GM12878 (cell line): ENCODE measurements at regions of chr3 and their contacts with region 1.

Region 1: DNA sequence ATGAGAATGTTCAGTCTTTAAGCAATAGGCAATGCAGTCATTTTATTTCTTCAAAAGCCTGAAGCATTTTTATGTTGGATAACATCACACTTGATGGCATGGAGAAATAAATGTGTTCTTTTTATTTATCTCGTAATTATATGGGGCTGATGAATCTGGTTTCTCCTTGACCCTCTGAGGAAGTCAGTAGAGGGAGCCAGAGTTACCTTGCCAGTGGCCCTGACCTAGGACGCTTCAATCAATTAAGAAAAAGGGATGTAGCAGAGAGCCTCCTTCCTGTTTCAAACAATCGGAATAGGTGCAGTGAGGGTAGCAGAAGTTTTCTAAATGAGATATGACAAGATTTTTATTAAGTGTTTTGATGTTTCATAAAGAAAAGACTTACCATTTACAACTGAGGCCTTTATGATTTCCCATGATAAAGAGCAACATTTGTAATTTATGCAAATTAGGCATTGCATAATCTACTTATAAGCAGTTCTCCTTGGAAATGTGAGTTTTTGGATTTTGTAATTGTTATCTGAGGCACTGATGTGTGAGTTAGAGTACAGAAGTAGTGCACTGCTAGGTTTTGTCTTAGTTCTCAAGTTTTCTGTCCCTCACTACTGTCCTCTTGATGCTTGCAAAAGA is 129.1 kb downstream of the RAP2B start:
- DNase-seq: no peak
- ATAC-seq: peak; percentile 86
- H3K4me3 ChIP-seq: no peak overlapping the region
- H3K27ac ChIP-seq: no peak overlapping the region
- H3K4me1 ChIP-seq: no peaks in the 10 kb centered on the region
- H3K27me3 ChIP-seq: no peaks in the 10 kb centered on the region
- CTCF ChIP-seq: peak; percentile 43 to 48 (median 47)
- EP300 ChIP-seq: no peak
- POLR2A ChIP-seq: no peak
- RAD21 ChIP-seq: peak; percentile 59

Region 2: GRCh38 chr3:153173758-153174516 is 117.2 kb before region 1 on chr3:
- CTCF ChIA-PET with region 1: no interaction called
- POLR2A ChIA-PET with region 1: no interaction called
- RAD21 ChIA-PET with region 1: no interaction called
- SMC1A ChIA-PET with region 1: no interaction called
- in situ Hi-C with region 1: no loop called
- intact Hi-C with region 1: no loop called
- DNase-seq: no peak
- ATAC-seq: peak; percentile 52; the same call in 2 of the 3 replicates
- H3K4me3 ChIP-seq: no peak overlapping the region
- H3K27ac ChIP-seq: no peak overlapping the region
- H3K4me1 ChIP-seq: no peaks in the 10 kb centered on the region
- H3K27me3 ChIP-seq: no peaks in the 10 kb centered on the region
- CTCF ChIP-seq: peak in 1 of 3 experiments; percentile 26; a peak in 1 of 6 replicates
- EP300 ChIP-seq: no peak
- POLR2A ChIP-seq: no peak
- RAD21 ChIP-seq: no peak

Region 3: DNA sequence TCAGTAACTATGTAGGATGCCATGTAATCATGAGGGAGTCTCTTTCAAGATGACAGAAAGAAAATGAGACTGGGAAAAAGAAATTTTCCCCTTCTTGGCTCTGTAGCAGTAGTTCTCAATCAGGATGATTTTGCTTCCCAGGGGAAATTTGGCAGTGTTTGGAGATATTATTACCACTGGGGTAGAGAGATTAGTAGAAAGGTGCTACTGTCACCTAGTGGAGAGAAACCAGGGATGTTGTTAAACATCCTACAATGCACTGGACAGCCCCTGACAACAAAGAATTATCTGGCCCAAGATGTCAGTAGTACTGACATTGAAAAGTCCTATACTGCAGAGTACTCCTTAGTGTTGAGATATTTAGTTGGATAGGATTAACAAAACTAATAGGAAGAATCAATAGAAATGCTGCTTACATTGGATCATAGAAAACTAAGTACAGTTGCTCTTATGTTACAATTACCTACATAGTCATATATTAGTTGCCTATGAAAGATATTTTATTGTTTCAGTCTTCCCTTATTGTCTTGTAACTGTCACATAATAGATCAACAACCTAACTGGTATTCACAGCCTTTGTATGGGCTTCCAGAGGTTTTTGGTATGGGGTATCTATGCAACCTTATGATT is 304.1 kb after region 1 on chr3:
- CTCF ChIA-PET with region 1: interaction called, 3 read pairs
- POLR2A ChIA-PET with region 1: no interaction called
- RAD21 ChIA-PET with region 1: no interaction called
- SMC1A ChIA-PET with region 1: no interaction called
- in situ Hi-C with region 1: no loop called
- intact Hi-C with region 1: loop called (anchors 2 kb)
- DNase-seq: no peak
- ATAC-seq: peak; percentile 75
- H3K4me3 ChIP-seq: no peak overlapping the region
- H3K27ac ChIP-seq: no peak overlapping the region
- H3K4me1 ChIP-seq: no peaks in the 10 kb centered on the region
- H3K27me3 ChIP-seq: no peaks in the 10 kb centered on the region
- CTCF ChIP-seq: peak; percentile 50 to 65 (median 54)
- EP300 ChIP-seq: no peak
- POLR2A ChIP-seq: no peak
- RAD21 ChIP-seq: peak; percentile 75

Region 4: DNA sequence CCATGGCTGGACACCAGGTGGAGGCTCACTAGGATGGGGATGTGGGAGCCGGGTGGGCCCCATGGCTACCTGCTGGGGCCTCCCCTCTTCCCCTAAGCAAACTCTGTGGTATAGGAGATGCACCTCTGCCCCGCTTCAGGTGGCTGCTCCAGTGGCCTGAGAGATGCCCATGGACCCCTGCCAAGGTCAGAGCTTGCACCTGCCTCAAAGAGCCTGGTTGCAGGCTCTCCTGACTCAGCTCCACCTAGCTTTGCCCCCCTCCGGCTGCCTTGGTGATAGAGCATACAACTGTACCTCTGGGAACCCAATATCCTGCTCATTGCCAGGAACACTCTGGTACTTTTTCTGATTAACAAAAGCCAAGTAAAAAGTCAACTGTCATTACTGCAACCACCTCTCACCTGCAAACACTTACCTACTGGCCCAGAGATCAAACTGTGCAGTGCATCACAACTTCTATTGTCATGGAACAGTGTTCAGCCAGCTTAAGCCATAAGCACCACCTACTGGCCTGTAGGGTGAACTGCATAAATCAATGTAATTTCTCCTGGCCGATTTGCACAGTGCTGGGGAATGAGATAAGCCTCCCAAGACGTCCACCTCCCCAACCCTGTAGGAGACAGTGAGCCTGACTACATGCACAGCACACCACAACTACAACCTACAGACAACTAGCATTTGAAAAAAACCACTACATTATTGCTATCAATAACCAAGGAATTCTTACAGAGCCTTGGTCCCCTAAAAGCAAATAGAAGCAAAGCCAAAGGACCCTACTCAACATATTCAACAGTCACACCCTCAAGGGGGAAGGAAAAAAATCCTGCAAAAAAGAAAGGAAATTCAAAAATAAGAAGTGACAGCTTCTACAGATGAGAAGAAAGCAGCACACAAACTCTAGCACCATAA is 477.6 kb after region 1 on chr3:
- CTCF ChIA-PET with region 1: no interaction called
- POLR2A ChIA-PET with region 1: no interaction called
- RAD21 ChIA-PET with region 1: no interaction called
- SMC1A ChIA-PET with region 1: no interaction called
- in situ Hi-C with region 1: no loop called
- intact Hi-C with region 1: loop called (anchors 1 kb)
- DNase-seq: peak; percentile 9
- ATAC-seq: peak; percentile 98
- H3K4me3 ChIP-seq: no peak overlapping the region
- H3K27ac ChIP-seq: no peak overlapping the region
- H3K4me1 ChIP-seq: no peaks in the 10 kb centered on the region
- H3K27me3 ChIP-seq: no peaks in the 10 kb centered on the region
- CTCF ChIP-seq: peak; percentile 77 to 82 (median 79)
- EP300 ChIP-seq: no peak
- POLR2A ChIP-seq: no peak
- RAD21 ChIP-seq: peak; percentile 85